Naive thymus-derived CD8-positive, alpha-beta T cell (primary cell): ENCODE measurements at regions of chr11 and their contacts with region 1.

Region 1: GRCh38 chr11:14643697-14644225 is at the start of gene PDE3B:
- DNase-seq: peak; percentile 47 to 83 (median 68)
- ATAC-seq: peak; percentile 54 to 62
- H3K4me3 Mint-ChIP-seq: peak within 1 kb of the TSS; percentile 85 to 98 (median 90)
- H3K27ac Mint-ChIP-seq: peak within 1 kb of the TSS; percentile 85 to 98 (median 94)
- H3K4me1 Mint-ChIP-seq: peaks cover 24 to 47% (median 42%) of the 10 kb centered on the region in 4 donors
- H3K27me3 Mint-ChIP-seq: peaks cover 0 to 3% (median 0%) of the 10 kb centered on the region in 5 donors
- polyA plus RNA-seq, gene PDE3B: 59.2 to 127 (median 74.8) TPM

Region 2: GRCh38 chr11:14537134-14537599 is 106.6 kb before region 1 on chr11:
- POLR2A ChIA-PET with region 1: interaction called, 32 read pairs
- DNase-seq: peak in 8 of 10 donors; percentile 7 to 75 (median 56)
- ATAC-seq: peak; percentile 83 to 90
- H3K4me3 Mint-ChIP-seq: peak overlapping the region; percentile 6 to 87 (median 76)
- H3K27ac Mint-ChIP-seq: peak overlapping the region in 9 of 10 donors; percentile 65 to 96 (median 94)
- H3K4me1 Mint-ChIP-seq: peaks cover 13 to 45% (median 38%) of the 10 kb centered on the region in 4 donors
- H3K27me3 Mint-ChIP-seq: no peaks in the 10 kb centered on the region

Region 3: DNA sequence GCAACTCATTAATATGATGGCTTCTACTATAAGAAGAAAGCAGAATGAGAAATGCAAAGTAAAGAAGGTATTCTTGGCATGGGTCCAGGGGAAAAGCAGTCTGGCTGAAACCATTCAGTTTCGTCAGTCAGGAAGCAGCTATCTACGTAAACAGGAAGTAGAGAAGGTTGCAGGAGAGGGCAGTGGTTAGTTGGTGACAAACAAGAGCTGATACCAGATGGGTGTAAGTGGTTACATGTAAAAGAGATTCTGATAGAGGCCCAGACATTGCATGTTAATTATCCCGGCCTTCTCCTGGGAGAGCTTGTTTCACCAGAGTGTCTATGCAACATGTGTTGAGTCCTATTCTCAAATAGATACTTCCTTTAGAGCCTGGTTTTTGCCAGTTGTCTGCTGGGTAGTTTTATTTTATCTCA is 65.2 kb before region 1 on chr11:
- POLR2A ChIA-PET with region 1: interaction called, 82 read pairs
- DNase-seq: peak; percentile 14 to 95 (median 83)
- ATAC-seq: peak; percentile 95 to 96
- H3K4me3 Mint-ChIP-seq: peak overlapping the region; percentile 18 to 76 (median 48)
- H3K27ac Mint-ChIP-seq: peak overlapping the region; percentile 86 to 98 (median 96)
- H3K4me1 Mint-ChIP-seq: peaks cover 37 to 67% (median 66%) of the 10 kb centered on the region in 4 donors
- H3K27me3 Mint-ChIP-seq: no peaks in the 10 kb centered on the region

Region 4: DNA sequence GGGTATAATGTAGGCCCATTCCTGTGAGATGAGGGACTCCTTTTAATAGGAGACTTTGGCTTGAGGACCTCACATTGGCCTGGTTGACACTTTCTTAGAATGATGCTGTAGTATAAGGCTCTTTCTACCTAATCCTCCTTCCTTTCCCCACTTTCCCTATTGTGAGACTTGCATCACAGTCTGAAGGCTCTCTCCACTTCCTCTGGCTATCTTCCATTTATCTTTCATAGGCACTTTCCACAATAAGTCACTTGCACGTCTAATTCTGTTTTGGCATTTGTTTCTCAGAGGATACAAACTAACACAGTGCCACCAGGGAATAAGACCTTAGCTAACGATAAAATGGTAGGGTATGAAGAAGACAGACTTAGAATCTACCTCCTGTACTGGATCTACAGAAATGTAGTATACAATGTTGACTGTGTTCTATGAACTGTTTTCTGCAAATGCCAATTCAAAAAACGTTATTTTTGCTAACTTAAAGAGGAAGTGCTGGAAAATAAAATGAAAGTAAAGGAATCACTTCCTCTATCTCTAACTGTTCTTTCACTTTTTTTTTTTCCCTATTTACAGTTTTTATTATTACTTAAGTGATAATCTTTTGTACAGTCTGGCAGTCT is 18.1 kb before region 1 on chr11:
- POLR2A ChIA-PET with region 1: interaction called, 44 read pairs
- DNase-seq: no peak
- ATAC-seq: no peak
- H3K4me3 Mint-ChIP-seq: peak overlapping the region in 9 of 10 donors; percentile 1 to 50 (median 31)
- H3K27ac Mint-ChIP-seq: peak overlapping the region; percentile 2 to 92 (median 68)
- H3K4me1 Mint-ChIP-seq: peaks cover 24 to 68% (median 66%) of the 10 kb centered on the region in 4 donors
- H3K27me3 Mint-ChIP-seq: no peaks in the 10 kb centered on the region

Region 5: GRCh38 chr11:14764579-14765527 is 121.1 kb after region 1 on chr11:
- POLR2A ChIA-PET with region 1: interaction called, 51 read pairs
- DNase-seq: peak in 9 of 10 donors; percentile 34 to 94 (median 77)
- ATAC-seq: peak; percentile 77 to 79
- H3K4me3 Mint-ChIP-seq: peak overlapping the region in 4 of 10 donors; percentile 38 to 68 (median 56)
- H3K27ac Mint-ChIP-seq: peak overlapping the region in 1 of 10 donors; percentile 67
- H3K4me1 Mint-ChIP-seq: peaks cover 14 to 46% (median 31%) of the 10 kb centered on the region in 4 donors
- H3K27me3 Mint-ChIP-seq: no peaks in the 10 kb centered on the region

Region 6: GRCh38 chr11:14907411-14908213 is 263.9 kb after region 1 on chr11:
- POLR2A ChIA-PET with region 1: interaction called, 12 read pairs
- DNase-seq: peak; percentile 64 to 88 (median 80)
- ATAC-seq: peak; percentile 52 to 60
- H3K4me3 Mint-ChIP-seq: peak overlapping the region in 2 of 10 donors; percentile 15 to 25
- H3K27ac Mint-ChIP-seq: peak overlapping the region; percentile 35 to 96 (median 74)
- H3K4me1 Mint-ChIP-seq: peaks cover 24 to 44% (median 43%) of the 10 kb centered on the region in 4 donors
- H3K27me3 Mint-ChIP-seq: no peaks in the 10 kb centered on the region